ENCODE measurements at regions of chr2 and their contacts with region 1.

Region 1: GRCh38 chr2:238560234-238560633 is 133.5 kb downstream of the ASB1 start:
- DNase-seq: peak; percentile 62
- ATAC-seq: peak; percentile 96
- H3K4me3 ChIP-seq: no peak overlapping the region; a peak in 1 of 6 replicates
- H3K27ac ChIP-seq: no peak overlapping the region
- H3K4me1 ChIP-seq: peaks cover 13% of the 10 kb centered on the region
- H3K27me3 ChIP-seq: peaks cover 5 to 50% of the 10 kb centered on the region in 2 experiments; a peak in 3 of 5 replicates
- CTCF ChIP-seq: peak; percentile 87
- EP300 ChIP-seq: no peak
- POLR2A ChIP-seq: no peak
- RAD21 ChIP-seq: peak; percentile 90

Region 2: GRCh38 chr2:238462782-238463396 is 97.3 kb before region 1 on chr2:
- CTCF ChIA-PET with region 1: no interaction called
- POLR2A ChIA-PET with region 1: no interaction called
- in situ Hi-C with region 1: no loop called
- intact Hi-C with region 1: loop called (anchors 5 kb)
- DNase-seq: peak; percentile 77
- ATAC-seq: peak; percentile 58
- H3K4me3 ChIP-seq: no peak overlapping the region
- H3K27ac ChIP-seq: no peak overlapping the region
- H3K4me1 ChIP-seq: peaks cover 38% of the 10 kb centered on the region
- H3K27me3 ChIP-seq: no peaks in the 10 kb centered on the region
- CTCF ChIP-seq: peak; percentile 84
- EP300 ChIP-seq: no peak
- POLR2A ChIP-seq: no peak
- RAD21 ChIP-seq: peak; percentile 77

Region 3: GRCh38 chr2:238513346-238513745 is 46.9 kb before region 1 on chr2:
- CTCF ChIA-PET with region 1: interaction called, 9 read pairs
- POLR2A ChIA-PET with region 1: interaction called, 4 read pairs
- in situ Hi-C with region 1: no loop called
- intact Hi-C with region 1: loop called (anchors 1 kb)
- DNase-seq: peak; percentile 68
- ATAC-seq: peak; percentile 77
- H3K4me3 ChIP-seq: no peak overlapping the region
- H3K27ac ChIP-seq: no peak overlapping the region
- H3K4me1 ChIP-seq: peaks cover 38% of the 10 kb centered on the region
- H3K27me3 ChIP-seq: no peaks in the 10 kb centered on the region
- CTCF ChIP-seq: peak; percentile 72
- EP300 ChIP-seq: no peak
- POLR2A ChIP-seq: no peak
- RAD21 ChIP-seq: peak; percentile 77; the same call in 1 of the 2 replicates

Region 4: DNA sequence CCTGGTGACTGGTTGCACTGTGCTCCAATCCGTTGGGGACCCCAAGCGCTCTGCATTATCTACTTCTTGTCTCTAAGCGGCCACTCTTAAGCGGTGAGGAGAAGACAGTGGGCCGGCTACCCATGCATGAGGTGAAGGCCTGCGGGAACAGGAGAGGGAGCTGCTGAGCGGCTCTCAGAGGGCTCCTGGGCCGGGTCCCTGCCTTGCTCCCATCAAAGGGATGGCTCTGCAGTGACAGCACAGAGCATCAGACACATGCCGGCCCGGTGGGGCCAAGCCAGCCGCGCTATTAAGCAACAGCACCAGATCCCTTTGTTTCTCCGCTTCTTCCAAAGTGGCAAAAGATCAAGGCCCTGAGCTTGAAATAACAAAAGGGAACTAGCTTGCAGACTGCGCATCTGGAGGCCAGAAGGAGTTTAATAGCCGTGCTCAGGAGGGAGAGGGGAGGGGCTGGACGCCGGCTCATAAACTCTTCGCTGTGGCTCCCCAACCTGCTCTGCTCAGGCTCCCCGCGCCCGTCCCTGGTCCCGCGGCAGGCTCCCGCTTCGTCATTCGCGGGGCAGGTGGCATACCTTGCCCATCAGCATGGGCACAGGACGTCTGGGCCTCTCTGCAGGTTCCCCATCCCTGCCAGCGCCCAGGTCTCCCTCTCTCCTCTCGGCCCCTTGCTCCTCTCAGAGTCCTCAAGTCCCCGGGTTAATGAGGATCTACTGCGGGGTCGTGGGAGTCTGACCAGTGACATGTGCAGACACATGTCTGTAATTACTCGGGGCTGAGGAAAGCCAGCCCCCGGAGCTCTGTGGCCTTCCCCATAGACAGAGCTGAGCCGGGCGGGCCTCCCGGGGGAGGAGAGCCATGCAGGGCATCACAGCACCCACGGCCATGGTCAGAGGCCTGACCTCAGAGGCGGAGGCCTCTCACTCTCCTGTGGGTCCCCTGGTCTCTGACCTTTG is 36.8 kb before region 1 on chr2:
- CTCF ChIA-PET with region 1: interaction called, 4 read pairs
- POLR2A ChIA-PET with region 1: interaction called, 5 read pairs
- in situ Hi-C with region 1: no loop called
- intact Hi-C with region 1: loop called (anchors 1 kb)
- DNase-seq: peak; percentile 93
- ATAC-seq: peak; percentile 96
- H3K4me3 ChIP-seq: peak overlapping the region in 1 of 3 experiments; percentile 25; a peak in 1 of 6 replicates
- H3K27ac ChIP-seq: no peak overlapping the region
- H3K4me1 ChIP-seq: peaks cover 29% of the 10 kb centered on the region
- H3K27me3 ChIP-seq: no peaks in the 10 kb centered on the region
- CTCF ChIP-seq: peak; percentile 81
- EP300 ChIP-seq: peak; percentile 66 to 82; a peak in 3 of 4 replicates
- POLR2A ChIP-seq: no peak
- RAD21 ChIP-seq: peak; percentile 95

Region 5: GRCh38 chr2:238615187-238615586 is 55.0 kb after region 1 on chr2:
- CTCF ChIA-PET with region 1: no interaction called
- POLR2A ChIA-PET with region 1: no interaction called
- in situ Hi-C with region 1: no loop called
- intact Hi-C with region 1: loop called (anchors 1 kb)
- DNase-seq: no peak
- ATAC-seq: no peak; the same call in 2 of the 3 replicates
- H3K4me3 ChIP-seq: no peak overlapping the region
- H3K27ac ChIP-seq: no peak overlapping the region
- H3K4me1 ChIP-seq: no peaks in the 10 kb centered on the region
- H3K27me3 ChIP-seq: peaks cover 0 to 15% of the 10 kb centered on the region in 2 experiments; a peak in 3 of 5 replicates
- CTCF ChIP-seq: 0 out of 2 replicates have a peak, but pooled peaks have one; percentile 16
- EP300 ChIP-seq: no peak
- POLR2A ChIP-seq: no peak
- RAD21 ChIP-seq: no peak